CD4-positive, alpha-beta memory T cell (primary cell): ENCODE measurements at regions of chr1 and their contacts with region 1.

Region 1: GRCh38 chr1:183622884-183623785 is 12.4 kb downstream of the ARPC5 start:
- DNase-seq: peak; percentile 42 to 60 (median 50)
- H3K4me3 ChIP-seq: no peak overlapping the region
- H3K4me3 Mint-ChIP-seq: no peak overlapping the region
- H3K27ac ChIP-seq: no peak overlapping the region
- H3K27ac Mint-ChIP-seq: peak overlapping the region; percentile 25 to 67 (median 49)
- H3K4me1 ChIP-seq: peaks cover 11% of the 10 kb centered on the region
- H3K4me1 Mint-ChIP-seq: peaks cover under 1 to 10% (median 7%) of the 10 kb centered on the region in 4 donors
- H3K27me3 ChIP-seq: no peaks in the 10 kb centered on the region
- H3K27me3 Mint-ChIP-seq: no peaks in the 10 kb centered on the region

Region 2: DNA sequence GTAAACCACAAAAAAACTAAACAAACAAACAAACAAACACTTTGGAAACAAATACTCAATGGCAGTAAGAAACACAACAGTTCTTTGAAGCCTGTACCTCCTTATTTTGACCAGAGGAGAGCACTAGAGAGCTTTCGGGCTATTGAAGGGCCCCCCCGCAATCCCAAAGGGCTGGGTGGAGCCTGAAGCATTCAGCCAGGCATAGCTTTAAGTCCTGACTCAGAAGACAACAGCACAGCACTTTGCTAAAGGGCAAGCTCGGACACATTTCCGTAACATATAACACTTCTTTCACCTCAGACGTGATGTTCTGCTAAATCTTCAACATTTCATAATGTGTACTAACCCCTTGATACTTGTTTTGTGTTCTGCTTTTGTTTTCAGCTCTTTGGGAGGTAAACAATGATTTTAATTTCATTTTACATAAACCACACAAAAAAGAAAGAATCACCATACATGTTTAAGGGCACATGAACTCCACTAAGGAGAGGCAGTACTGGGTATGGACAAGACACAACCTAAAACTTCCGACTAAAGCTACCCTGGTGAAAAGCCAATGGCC is 660.5 kb before region 1 on chr1:
- CTCF ChIA-PET with region 1: no interaction called
- POLR2A ChIA-PET with region 1: no interaction called
- intact Hi-C with region 1: loop called (anchors 5 kb)
- DNase-seq: peak in 2 of 5 donors; percentile 6 to 10
- H3K4me3 ChIP-seq: no peak overlapping the region
- H3K4me3 Mint-ChIP-seq: no peak overlapping the region
- H3K27ac ChIP-seq: no peak overlapping the region
- H3K27ac Mint-ChIP-seq: no peak overlapping the region
- H3K4me1 ChIP-seq: no peaks in the 10 kb centered on the region
- H3K4me1 Mint-ChIP-seq: peaks cover 0 to 5% (median 2%) of the 10 kb centered on the region in 4 donors
- H3K27me3 ChIP-seq: no peaks in the 10 kb centered on the region
- H3K27me3 Mint-ChIP-seq: peaks cover 4 to 7% of the 10 kb centered on the region in 2 donors

Region 3: GRCh38 chr1:183543619-183544204 is 79.4 kb before region 1 on chr1:
- CTCF ChIA-PET with region 1: no interaction called
- POLR2A ChIA-PET with region 1: no interaction called
- intact Hi-C with region 1: loop called (anchors 5 kb)
- DNase-seq: peak in 4 of 5 donors; percentile 36 to 47 (median 41)
- H3K4me3 ChIP-seq: no peak overlapping the region
- H3K4me3 Mint-ChIP-seq: no peak overlapping the region
- H3K27ac ChIP-seq: no peak overlapping the region
- H3K27ac Mint-ChIP-seq: peak overlapping the region in 4 of 7 donors; percentile 8 to 87 (median 28)
- H3K4me1 ChIP-seq: no peaks in the 10 kb centered on the region
- H3K4me1 Mint-ChIP-seq: peaks cover 0 to 5% (median 1%) of the 10 kb centered on the region in 4 donors
- H3K27me3 ChIP-seq: no peaks in the 10 kb centered on the region
- H3K27me3 Mint-ChIP-seq: no peaks in the 10 kb centered on the region